Dendritic cell treated with granulocyte-macrophage colony-stimulating factor and Interleukin-4, amounts not matched to agents 40 ng/mL and 50 ng/mL, for 4 days (primary cell): ENCODE measurements at regions of chr2 and their contacts with region 1.

Region 1: DNA sequence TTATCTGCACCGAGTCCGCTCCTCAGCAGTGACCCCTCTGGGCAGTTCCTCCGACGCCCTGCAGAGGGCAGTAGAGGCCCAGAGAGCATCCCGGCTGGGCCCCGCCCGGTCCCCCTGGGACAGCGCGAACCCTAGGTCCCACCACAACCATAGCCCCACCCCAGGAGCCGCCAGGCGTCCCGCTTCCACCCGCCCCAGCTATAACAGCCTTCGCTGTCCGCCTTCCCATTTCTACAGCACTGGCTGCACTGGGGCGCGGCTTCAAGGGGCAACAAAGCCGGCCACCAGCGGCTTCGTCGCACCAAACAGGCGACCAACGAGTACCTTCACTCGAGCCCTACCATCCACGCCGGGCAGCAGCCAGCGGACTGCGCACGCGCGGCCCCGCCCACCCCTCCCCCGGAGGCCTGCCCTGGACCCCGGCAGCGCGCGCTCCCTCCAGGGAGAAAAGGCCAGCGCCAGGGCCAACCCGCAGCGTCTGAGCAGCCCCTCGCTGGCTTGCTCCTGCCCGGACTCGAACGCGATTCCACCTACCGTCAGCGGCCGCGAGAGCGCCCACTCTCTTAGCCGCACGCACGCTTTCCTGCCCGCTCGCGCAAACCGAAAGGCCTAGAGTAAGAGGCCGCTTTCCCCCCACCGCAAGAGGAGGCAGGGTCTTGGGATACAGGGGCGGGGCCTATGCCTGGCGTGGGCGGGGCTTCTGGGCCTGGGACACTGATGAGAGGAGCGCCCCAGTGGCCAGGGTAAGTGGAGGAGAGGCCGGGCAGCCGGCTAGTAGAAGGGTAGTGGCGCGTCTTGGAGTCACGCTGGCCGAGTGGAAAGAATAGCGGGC is at the start of gene NHEJ1:
- H3K4me3 Mint-ChIP-seq: peak within 1 kb of the TSS; percentile 84
- H3K27ac Mint-ChIP-seq: peak within 1 kb of the TSS; percentile 90
- H3K4me1 Mint-ChIP-seq: peaks cover 19% of the 10 kb centered on the region
- H3K27me3 Mint-ChIP-seq: no peaks in the 10 kb centered on the region

Region 2: DNA sequence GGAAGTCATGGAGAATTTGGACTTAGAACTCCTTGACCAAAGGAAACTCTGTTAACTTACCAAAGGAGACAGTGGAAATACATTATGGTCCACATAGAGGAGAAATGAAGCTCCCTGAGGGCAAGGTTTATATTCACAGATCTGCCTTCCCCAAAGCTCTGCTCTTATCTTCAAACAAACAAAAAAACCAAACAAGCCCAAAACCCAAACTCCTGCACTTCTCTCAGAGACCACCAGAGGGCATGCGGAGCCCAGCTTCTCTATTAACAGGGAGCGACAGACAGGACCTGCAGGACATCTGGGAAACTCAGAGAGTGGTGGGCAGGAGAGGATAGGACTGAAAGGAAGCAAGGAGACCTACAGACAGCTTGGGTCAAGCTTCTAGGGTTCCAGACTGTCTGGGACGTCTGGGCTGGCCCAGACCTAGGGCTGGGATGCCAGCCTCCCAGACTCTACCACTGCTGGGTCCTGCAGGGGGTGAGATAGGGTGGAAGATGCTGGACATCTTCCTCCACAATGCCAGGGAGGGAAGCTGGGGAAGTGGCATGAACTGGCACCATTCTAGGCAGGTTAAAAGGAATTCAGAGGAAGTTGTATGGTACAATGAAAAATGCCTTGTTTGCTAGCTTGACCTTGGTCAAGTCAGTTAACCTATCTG is 283.7 kb before region 1 on chr2:
- intact Hi-C with region 1: no loop called
- H3K4me3 Mint-ChIP-seq: no peak overlapping the region
- H3K27ac Mint-ChIP-seq: no peak overlapping the region
- H3K4me1 Mint-ChIP-seq: peaks cover 36% of the 10 kb centered on the region
- H3K27me3 Mint-ChIP-seq: peaks cover 95% of the 10 kb centered on the region

Region 3: DNA sequence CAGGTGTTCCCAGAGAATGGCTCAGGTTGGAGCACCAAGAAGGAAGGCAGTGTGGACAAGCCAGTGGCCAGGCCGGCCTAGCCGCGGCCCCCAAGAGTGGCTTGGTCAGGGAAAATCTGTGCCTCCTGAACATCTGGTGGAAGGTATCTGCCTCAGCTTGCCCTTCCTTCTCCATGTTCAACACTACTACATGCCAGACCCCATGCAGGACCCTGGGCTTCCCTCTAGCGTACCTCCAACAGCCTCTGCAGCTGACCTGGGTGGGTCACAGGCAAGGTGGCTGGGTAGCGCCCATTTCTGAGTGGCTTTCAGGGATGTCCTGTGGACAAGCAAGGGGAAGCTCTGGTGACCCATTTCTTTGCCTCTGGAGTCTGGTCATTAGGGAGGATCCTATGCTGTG is 272.1 kb before region 1 on chr2:
- intact Hi-C with region 1: no loop called
- H3K4me3 Mint-ChIP-seq: no peak overlapping the region
- H3K27ac Mint-ChIP-seq: no peak overlapping the region
- H3K4me1 Mint-ChIP-seq: no peaks in the 10 kb centered on the region
- H3K27me3 Mint-ChIP-seq: peaks cover 80% of the 10 kb centered on the region

Region 4: GRCh38 chr2:219041252-219041651 is 119.2 kb before region 1 on chr2 and contains the start of gene CFAP65:
- intact Hi-C with region 1: no loop called
- H3K4me3 Mint-ChIP-seq: peak within 1 kb of the TSS; percentile 41
- H3K27ac Mint-ChIP-seq: no peak within 1 kb of the TSS
- H3K4me1 Mint-ChIP-seq: peaks cover 6% of the 10 kb centered on the region
- H3K27me3 Mint-ChIP-seq: peaks cover 71% of the 10 kb centered on the region

Region 5: DNA sequence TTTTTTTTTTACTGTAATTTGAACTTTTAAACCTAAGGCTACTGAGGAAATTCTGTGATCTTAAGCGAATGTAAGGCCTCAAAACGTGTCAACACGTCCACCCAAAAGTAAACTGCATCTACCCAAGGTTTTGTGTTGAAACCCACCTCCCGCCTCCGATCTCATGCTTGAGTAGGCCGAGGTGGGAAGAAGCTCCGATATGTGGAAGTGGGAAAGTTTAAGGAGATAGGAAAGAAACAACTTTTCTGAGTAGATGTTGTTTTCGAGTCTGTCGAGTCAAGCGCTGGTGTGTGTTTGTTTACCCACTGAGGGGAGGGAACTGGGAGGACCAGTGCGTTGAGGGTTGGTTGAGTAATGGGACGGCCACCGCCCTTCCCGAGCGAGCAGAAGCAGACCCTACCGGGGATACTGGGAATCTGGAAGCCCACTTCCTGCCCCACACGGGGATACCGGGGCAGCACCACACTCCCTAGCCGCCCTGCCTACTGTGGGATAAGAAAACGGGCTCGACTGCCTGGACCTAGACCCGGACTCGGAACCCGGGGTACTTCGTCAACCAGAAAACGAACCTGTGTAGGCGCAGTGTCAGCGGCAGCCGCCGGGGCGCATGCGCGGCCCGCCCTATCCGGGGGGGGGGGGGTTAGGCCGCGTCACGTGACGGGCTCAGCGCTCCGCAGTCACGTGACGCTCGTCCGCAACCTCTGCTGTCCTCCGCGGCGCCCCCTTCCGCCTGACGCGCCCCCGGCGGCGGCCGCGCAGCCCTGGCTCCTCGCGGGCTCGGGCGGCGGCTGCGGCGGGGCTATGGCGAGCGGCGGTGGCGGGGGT is 17.4 kb after region 1 on chr2 and contains the start of gene RETREG2:
- intact Hi-C with region 1: loop called (anchors 1 kb)
- H3K4me3 Mint-ChIP-seq: peak within 1 kb of the TSS; percentile 88
- H3K27ac Mint-ChIP-seq: peak within 1 kb of the TSS; percentile 99
- H3K4me1 Mint-ChIP-seq: peaks cover 84% of the 10 kb centered on the region
- H3K27me3 Mint-ChIP-seq: no peaks in the 10 kb centered on the region

Region 6: GRCh38 chr2:219206442-219207253 is 46.2 kb after region 1 on chr2 and contains the start of gene ZFAND2B:
- intact Hi-C with region 1: loop called (anchors 1 kb)
- H3K4me3 Mint-ChIP-seq: peak within 1 kb of the TSS; percentile 71
- H3K27ac Mint-ChIP-seq: peak within 1 kb of the TSS; percentile 83
- H3K4me1 Mint-ChIP-seq: peaks cover 33% of the 10 kb centered on the region
- H3K27me3 Mint-ChIP-seq: peaks cover 4% of the 10 kb centered on the region

Region 7: GRCh38 chr2:219218732-219219701 is 58.6 kb after region 1 on chr2 and contains the start of gene ABCB6:
- intact Hi-C with region 1: loop called (anchors 2 kb)
- H3K4me3 Mint-ChIP-seq: peak within 1 kb of the TSS; percentile 74
- H3K27ac Mint-ChIP-seq: peak within 1 kb of the TSS; percentile 94
- H3K4me1 Mint-ChIP-seq: peaks cover 56% of the 10 kb centered on the region
- H3K27me3 Mint-ChIP-seq: peaks cover 42% of the 10 kb centered on the region

Region 8: DNA sequence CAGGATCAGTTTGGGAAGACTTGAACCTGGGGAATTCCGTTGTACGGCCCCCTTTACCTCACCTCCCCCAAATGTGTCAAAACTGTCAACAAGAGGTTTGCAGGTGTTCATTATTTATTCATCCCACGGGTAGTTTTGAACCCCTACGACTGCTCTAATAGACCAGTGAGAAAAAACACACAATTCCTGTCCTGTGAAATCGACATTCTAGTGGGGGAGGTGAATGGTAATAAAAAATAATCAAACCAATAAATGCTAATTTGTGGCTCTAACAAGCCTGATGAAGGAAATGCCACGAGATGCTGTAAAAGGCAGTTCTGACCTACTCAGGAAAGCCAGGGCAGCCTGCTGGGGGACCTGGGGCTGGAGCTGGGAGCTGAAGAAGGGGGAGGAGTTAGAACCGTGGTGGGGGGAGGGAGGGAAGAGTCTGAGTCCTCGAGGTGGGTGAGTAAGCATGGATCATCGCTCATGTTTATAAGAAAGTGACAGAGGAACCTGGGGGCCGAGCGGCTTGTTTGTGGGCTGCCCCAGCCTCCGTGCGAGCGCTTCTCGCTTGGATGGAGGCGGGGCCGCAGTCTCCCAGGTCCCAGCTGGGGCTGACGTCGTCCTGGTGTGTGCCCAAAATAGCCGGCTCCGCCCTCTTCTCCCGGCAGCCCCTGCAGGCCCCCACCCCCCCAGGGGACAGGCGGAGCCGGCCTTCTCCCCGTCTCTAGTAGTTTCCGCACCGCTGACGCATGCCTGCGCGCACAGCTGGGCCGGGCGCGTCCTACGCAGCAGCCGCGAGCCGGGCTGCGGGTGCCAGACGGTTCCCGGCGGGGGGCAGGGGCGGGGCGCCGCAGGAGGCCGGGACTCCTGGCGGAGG is 118.5 kb after region 1 on chr2 and contains the start of gene DNAJB2:
- intact Hi-C with region 1: loop called (anchors 1 kb)
- H3K4me3 Mint-ChIP-seq: peak within 1 kb of the TSS; percentile 86
- H3K27ac Mint-ChIP-seq: peak within 1 kb of the TSS; percentile 89
- H3K4me1 Mint-ChIP-seq: peaks cover 50% of the 10 kb centered on the region
- H3K27me3 Mint-ChIP-seq: peaks cover 5% of the 10 kb centered on the region

Region 9: GRCh38 chr2:219294356-219295351 is 134.3 kb after region 1 on chr2:
- intact Hi-C with region 1: loop called (anchors 1 kb)
- H3K4me3 Mint-ChIP-seq: peak overlapping the region; percentile 73
- H3K27ac Mint-ChIP-seq: peak overlapping the region; percentile 76
- H3K4me1 Mint-ChIP-seq: peaks cover 13% of the 10 kb centered on the region
- H3K27me3 Mint-ChIP-seq: peaks cover 59% of the 10 kb centered on the region